Gastrocnemius medialis (tissue), 4 donors: ENCODE measurements at regions of chr1 and their contacts with region 1.

Region 1: DNA sequence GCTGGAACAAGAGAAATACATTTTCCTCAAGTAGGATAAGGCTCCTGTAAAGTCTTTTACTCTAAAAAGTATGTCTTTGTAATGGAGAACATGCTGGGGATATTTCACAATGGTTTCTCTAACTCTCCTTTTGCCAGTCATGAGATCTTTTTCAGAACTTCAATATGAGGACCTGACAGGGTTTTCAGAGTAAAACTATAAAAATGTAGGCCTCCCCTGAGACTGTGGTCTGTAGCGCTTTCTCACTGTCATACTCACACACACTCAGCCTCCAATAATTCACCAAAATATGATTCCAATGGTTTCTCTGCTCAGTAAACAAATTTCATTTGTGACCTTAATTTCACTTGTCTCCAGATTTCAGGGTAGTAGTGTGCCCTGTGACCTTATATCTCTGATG is 440.1 kb upstream of the PTBP2 start:
- DNase-seq: no peak
- ATAC-seq: no peak
- H3K4me3 ChIP-seq: no peak overlapping the region
- H3K27ac ChIP-seq: no peak overlapping the region
- H3K4me1 ChIP-seq: no peaks in the 10 kb centered on the region
- H3K27me3 ChIP-seq: no peaks in the 10 kb centered on the region
- CTCF ChIP-seq: no peak
- POLR2A ChIP-seq: no peak

Region 2: GRCh38 chr1:95640746-95641145 is 640.7 kb before region 1 on chr1:
- in situ Hi-C with region 1: no loop called
- intact Hi-C with region 1: loop called (anchors 10 kb)
- DNase-seq: no peak
- ATAC-seq: no peak
- H3K4me3 ChIP-seq: no peak overlapping the region
- H3K27ac ChIP-seq: no peak overlapping the region
- H3K4me1 ChIP-seq: no peaks in the 10 kb centered on the region
- H3K27me3 ChIP-seq: no peaks in the 10 kb centered on the region
- CTCF ChIP-seq: no peak
- POLR2A ChIP-seq: no peak